ENCODE measurements at regions of chr15 and their contacts with region 1.

Region 1: DNA sequence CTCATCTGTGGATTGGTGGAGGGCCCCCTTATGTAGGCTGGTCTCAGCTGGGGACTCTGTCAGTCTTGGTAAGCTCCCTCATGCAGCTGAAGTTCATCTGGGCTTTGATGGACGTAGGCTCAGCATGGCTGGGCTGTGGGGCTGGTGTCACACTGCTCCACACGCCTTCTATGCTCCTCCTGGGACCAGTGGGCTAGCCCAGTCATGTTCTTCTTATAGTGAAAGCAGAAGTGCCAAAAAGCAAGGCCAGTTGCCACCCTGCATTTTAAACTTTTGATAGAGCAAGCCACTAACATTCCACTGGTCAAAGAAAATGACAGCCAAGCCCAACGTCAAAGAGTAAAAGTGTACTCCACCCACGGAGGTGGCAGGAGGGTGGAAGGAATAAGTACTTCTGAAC is 165.5 kb downstream of the MEX3B start:
- DNase-seq: no peak
- ATAC-seq: no peak
- H3K4me3 ChIP-seq: no peak overlapping the region
- H3K27ac ChIP-seq: no peak overlapping the region
- H3K4me1 ChIP-seq: no peaks in the 10 kb centered on the region
- H3K27me3 ChIP-seq: no peaks in the 10 kb centered on the region
- CTCF ChIP-seq: no peak

Region 2: GRCh38 chr15:81937189-81937588 is 56.9 kb after region 1 on chr15:
- intact Hi-C with region 1: loop called in 1 of 2 experiments (anchors 2 kb)
- DNase-seq: no peak
- ATAC-seq: no peak
- H3K4me3 ChIP-seq: no peak overlapping the region
- H3K27ac ChIP-seq: no peak overlapping the region
- H3K4me1 ChIP-seq: no peaks in the 10 kb centered on the region
- H3K27me3 ChIP-seq: no peaks in the 10 kb centered on the region
- CTCF ChIP-seq: no peak

Region 3: GRCh38 chr15:82064824-82065223 is 184.5 kb after region 1 on chr15:
- intact Hi-C with region 1: no loop called
- DNase-seq: no peak
- ATAC-seq: no peak
- H3K4me3 ChIP-seq: no peak overlapping the region
- H3K27ac ChIP-seq: no peak overlapping the region
- H3K4me1 ChIP-seq: no peaks in the 10 kb centered on the region
- H3K27me3 ChIP-seq: peaks cover 0 to 39% (median 8%) of the 10 kb centered on the region in 3 donors
- CTCF ChIP-seq: no peak